AG04449 (cell line): ENCODE measurements at regions of chr20 and their contacts with region 1.

Region 1: GRCh38 chr20:58447511-58448391 is 58.7 kb downstream of the VAPB start:
- DNase-seq: no peak
- H3K4me3 ChIP-seq: no peak overlapping the region
- CTCF ChIP-seq: peak; percentile 82

Region 2: DNA sequence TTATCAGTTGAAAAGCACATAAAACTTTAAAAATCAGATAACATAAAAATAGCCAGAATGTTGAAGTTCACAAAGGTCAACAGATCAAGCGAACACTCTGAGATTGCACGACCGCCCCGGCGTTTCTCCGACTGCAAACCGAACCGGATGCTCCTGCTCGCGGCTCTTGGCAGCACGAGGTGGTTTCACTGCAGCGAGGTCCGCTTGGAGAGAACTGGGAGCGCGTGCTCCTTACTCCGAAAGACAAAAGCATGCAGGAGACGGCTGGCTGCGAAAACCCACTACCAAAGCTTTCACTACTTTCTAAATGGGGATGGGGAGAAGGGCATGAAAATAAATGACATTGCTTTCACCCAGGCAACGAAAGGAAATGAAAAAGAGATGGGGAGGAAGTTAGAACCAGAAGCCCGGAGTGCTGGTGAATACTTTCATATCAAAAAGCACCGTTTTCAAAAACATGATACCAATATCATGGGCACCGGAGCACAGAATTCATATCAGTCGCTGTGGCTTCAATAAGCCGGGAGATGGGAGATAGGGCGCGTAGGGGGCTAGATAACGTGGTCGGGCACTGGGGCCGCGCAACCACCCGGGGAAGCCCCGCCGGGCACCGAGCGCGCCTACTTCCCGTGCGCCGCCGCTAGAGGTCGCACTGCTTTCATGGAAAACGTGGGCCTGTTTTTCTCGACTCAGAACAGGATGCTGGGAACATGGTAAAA is 211.0 kb before region 1 on chr20:
- CTCF ChIA-PET with region 1: interaction called, 62 read pairs
- POLR2A ChIA-PET with region 1: no interaction called
- DNase-seq: no peak
- H3K4me3 ChIP-seq: peak overlapping the region; percentile 59
- CTCF ChIP-seq: peak; percentile 93

Region 3: GRCh38 chr20:58246346-58246745 is 201.4 kb before region 1 on chr20:
- CTCF ChIA-PET with region 1: interaction called, 31 read pairs
- POLR2A ChIA-PET with region 1: no interaction called
- DNase-seq: no peak
- H3K4me3 ChIP-seq: no peak overlapping the region
- CTCF ChIP-seq: peak; percentile 4

Region 4: GRCh38 chr20:58399926-58400325 is 47.8 kb before region 1 on chr20:
- CTCF ChIA-PET with region 1: no interaction called
- POLR2A ChIA-PET with region 1: no interaction called
- DNase-seq: no peak
- H3K4me3 ChIP-seq: no peak overlapping the region
- CTCF ChIP-seq: no peak

Region 5: GRCh38 chr20:58420798-58421496 is 26.8 kb before region 1 on chr20:
- CTCF ChIA-PET with region 1: interaction called, 12 read pairs
- POLR2A ChIA-PET with region 1: no interaction called
- DNase-seq: peak; percentile 17
- H3K4me3 ChIP-seq: no peak overlapping the region
- CTCF ChIP-seq: no peak

Region 6: DNA sequence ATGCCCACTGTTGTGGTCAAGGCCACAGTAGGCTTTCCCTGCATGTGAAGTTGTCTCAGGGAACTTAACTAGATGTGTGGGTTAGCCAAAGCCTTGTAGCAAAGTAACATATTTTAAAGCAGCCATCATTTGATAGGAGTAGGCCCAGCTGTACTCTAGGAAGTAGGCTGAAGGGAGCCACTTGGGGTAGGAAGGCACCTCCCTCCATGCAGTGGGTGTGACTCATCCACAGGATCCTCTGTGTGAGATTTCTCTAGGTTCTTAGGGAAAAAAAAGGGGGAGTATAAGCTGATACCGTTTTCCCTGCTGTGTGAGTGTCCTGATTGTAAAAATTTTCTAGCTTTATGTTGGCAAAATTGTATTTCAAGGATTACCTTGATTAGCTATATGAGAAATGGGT is 14.0 kb before region 1 on chr20:
- CTCF ChIA-PET with region 1: interaction called, 36 read pairs
- POLR2A ChIA-PET with region 1: no interaction called
- DNase-seq: no peak
- H3K4me3 ChIP-seq: no peak overlapping the region
- CTCF ChIP-seq: no peak

Region 7: DNA sequence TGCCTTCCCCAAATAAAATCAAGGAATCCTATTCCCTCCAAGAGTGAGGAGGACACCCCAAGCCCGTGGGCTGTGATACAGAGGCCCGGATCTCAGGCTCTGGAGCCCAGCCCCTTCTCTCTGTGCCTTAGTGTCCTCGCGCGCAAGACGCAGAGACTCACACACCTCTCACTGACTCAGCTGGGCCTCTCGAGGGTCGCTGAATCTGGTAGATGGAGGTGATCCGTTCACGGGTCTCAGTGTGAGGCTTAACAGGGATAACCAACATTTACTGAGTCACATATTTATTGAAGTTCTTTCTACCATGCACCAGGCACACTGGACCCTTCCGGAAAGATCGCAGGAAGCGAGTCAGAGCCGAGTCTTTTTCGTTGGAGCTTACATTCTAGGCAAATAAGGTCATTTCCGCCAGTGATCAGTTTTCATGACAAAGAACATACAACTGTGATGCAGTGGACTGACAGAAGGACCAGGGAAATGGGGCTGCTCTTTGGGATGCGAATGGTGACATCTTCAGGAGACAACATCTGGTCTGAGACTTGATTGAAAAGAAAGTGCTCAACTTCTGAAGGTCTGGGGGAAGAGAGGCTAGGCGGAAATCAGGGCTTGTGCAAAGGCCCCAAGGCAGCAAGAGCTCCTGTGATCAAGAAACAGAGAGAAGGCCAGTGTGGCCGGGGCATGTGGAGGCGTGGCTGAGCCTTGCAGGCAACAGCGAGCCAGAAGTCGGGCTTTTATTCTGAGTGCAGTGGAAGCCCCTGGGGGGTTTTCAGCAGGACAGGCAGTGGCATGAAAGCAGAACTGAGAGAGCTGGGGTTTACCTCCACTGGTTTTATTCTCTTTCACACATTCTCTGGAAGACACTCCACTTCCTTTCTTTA is 10.7 kb after region 1 on chr20:
- CTCF ChIA-PET with region 1: interaction called, 13 read pairs
- POLR2A ChIA-PET with region 1: no interaction called
- DNase-seq: no peak
- H3K4me3 ChIP-seq: no peak overlapping the region
- CTCF ChIP-seq: no peak